HepG2 (cell line): ENCODE measurements at regions of chr12 and their contacts with region 1.

Region 1: GRCh38 chr12:20646239-20646827 is 48.8 kb upstream of the SLCO1C1 start:
- DNase-seq: peak; percentile 58
- ATAC-seq: peak; percentile 84
- H3K4me3 ChIP-seq: no peak overlapping the region
- H3K27ac ChIP-seq: no peak overlapping the region
- H3K4me1 ChIP-seq: peaks cover 8% of the 10 kb centered on the region
- H3K27me3 ChIP-seq: no peaks in the 10 kb centered on the region
- CTCF ChIP-seq: peak; percentile 84
- EP300 ChIP-seq: no peak
- POLR2A ChIP-seq: no peak
- RAD21 ChIP-seq: peak; percentile 81

Region 2: GRCh38 chr12:20445687-20446086 is 200.6 kb before region 1 on chr12:
- CTCF ChIA-PET with region 1: no interaction called
- POLR2A ChIA-PET with region 1: no interaction called
- in situ Hi-C with region 1: no loop called
- intact Hi-C with region 1: no loop called
- DNase-seq: no peak
- ATAC-seq: no peak
- H3K4me3 ChIP-seq: no peak overlapping the region
- H3K27ac ChIP-seq: no peak overlapping the region
- H3K4me1 ChIP-seq: no peaks in the 10 kb centered on the region
- H3K27me3 ChIP-seq: no peaks in the 10 kb centered on the region
- CTCF ChIP-seq: no peak
- EP300 ChIP-seq: no peak
- POLR2A ChIP-seq: no peak
- RAD21 ChIP-seq: no peak

Region 3: DNA sequence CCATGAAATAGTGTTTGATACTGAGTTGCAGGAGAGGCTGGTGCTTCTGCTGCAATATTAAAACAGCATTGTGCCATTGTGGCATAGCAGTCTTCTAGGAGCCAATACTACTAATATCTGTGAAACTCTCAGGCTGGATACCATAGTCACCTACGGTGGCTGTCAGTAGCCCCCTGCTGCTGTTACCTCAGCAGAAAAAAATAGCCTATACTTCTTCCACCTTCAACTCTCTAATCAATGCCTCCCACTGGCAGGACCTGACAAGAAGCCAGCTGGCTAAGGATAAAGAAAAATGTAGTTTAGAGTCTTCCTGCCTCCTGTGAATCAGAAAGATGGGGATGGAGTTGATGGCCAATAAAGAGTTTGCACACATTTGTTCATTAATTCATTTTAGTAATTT is 186.4 kb before region 1 on chr12:
- CTCF ChIA-PET with region 1: no interaction called
- POLR2A ChIA-PET with region 1: no interaction called
- in situ Hi-C with region 1: no loop called
- intact Hi-C with region 1: no loop called
- DNase-seq: no peak
- ATAC-seq: no peak
- H3K4me3 ChIP-seq: no peak overlapping the region
- H3K27ac ChIP-seq: no peak overlapping the region
- H3K4me1 ChIP-seq: no peaks in the 10 kb centered on the region
- H3K27me3 ChIP-seq: no peaks in the 10 kb centered on the region
- CTCF ChIP-seq: no peak
- EP300 ChIP-seq: no peak
- POLR2A ChIP-seq: no peak
- RAD21 ChIP-seq: no peak

Region 4: DNA sequence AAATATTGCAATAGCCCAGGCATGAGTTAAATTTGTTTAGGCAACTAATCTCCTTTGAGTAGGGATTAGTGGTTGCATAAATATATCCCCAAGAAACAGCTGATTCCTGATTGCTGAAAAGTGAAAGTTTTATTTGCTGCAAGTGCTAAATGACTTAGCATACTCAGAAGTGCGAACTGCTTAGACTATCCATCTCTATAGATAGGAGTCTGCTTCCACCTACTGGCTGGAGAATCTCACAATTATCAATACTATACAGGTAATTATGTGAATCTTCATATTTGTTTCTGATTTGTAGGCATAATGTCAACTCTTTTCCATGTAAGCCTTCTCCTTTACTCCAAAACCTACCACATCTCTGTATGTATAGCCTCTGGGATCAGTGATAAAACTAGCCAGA is 152.2 kb after region 1 on chr12:
- CTCF ChIA-PET with region 1: interaction called, 39 read pairs
- POLR2A ChIA-PET with region 1: no interaction called
- in situ Hi-C with region 1: loop called (anchors 10 kb)
- intact Hi-C with region 1: loop called (anchors 1 kb)
- DNase-seq: peak; percentile 46
- ATAC-seq: peak; percentile 90
- H3K4me3 ChIP-seq: no peak overlapping the region
- H3K27ac ChIP-seq: no peak overlapping the region
- H3K4me1 ChIP-seq: no peaks in the 10 kb centered on the region
- H3K27me3 ChIP-seq: no peaks in the 10 kb centered on the region
- CTCF ChIP-seq: peak; percentile 71
- EP300 ChIP-seq: no peak
- POLR2A ChIP-seq: no peak
- RAD21 ChIP-seq: peak; percentile 61

Region 5: GRCh38 chr12:20950248-20950647 is 303.9 kb after region 1 on chr12:
- CTCF ChIA-PET with region 1: no interaction called
- POLR2A ChIA-PET with region 1: no interaction called
- in situ Hi-C with region 1: no loop called
- intact Hi-C with region 1: loop called (anchors 2 kb)
- DNase-seq: peak; percentile 6
- ATAC-seq: peak; percentile 69
- H3K4me3 ChIP-seq: no peak overlapping the region
- H3K27ac ChIP-seq: no peak overlapping the region
- H3K4me1 ChIP-seq: no peaks in the 10 kb centered on the region
- H3K27me3 ChIP-seq: no peaks in the 10 kb centered on the region
- CTCF ChIP-seq: peak; percentile 40; the same call in 1 of the 2 replicates
- EP300 ChIP-seq: no peak
- POLR2A ChIP-seq: no peak
- RAD21 ChIP-seq: no peak

Region 6: DNA sequence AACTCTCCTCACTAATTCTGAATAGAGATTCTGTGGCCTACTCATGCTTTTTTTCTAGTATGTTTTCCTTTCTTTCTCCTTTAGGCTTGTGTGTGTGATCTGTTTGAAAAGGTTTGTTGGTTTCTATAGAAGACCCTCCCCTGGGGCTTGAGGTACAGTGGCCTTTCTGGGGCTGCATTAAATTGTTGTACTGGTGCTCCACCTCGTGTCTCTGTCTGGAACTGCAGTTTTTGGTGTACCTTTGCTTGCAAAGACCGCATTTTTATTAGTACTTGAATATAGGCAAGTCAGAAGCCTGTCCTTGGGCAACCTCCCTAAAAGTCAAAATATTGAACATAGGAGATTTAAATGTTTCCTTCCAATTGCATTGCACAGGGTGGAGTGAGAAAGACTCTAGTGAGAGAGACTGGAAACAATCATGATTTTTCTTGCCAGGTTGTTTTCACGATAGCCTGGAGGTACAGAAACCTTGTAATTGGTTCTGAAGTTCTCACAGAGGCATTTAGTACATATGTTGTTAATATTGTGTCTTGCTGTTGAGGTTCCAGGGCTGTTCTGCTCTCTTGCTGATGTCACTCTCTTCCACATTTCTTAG is 523.6 kb after region 1 on chr12:
- CTCF ChIA-PET with region 1: interaction called, 19 read pairs
- POLR2A ChIA-PET with region 1: no interaction called
- in situ Hi-C with region 1: loop called (anchors 10 kb)
- intact Hi-C with region 1: loop called (anchors 1 kb)
- DNase-seq: peak; percentile 37
- ATAC-seq: peak; percentile 73
- H3K4me3 ChIP-seq: no peak overlapping the region
- H3K27ac ChIP-seq: no peak overlapping the region
- H3K4me1 ChIP-seq: no peaks in the 10 kb centered on the region
- H3K27me3 ChIP-seq: no peaks in the 10 kb centered on the region
- CTCF ChIP-seq: peak; percentile 80
- EP300 ChIP-seq: no peak
- POLR2A ChIP-seq: no peak
- RAD21 ChIP-seq: peak; percentile 62